Breast epithelium (tissue), 4 donors: ENCODE measurements at regions of chr5 and their contacts with region 1.

Region 1: DNA sequence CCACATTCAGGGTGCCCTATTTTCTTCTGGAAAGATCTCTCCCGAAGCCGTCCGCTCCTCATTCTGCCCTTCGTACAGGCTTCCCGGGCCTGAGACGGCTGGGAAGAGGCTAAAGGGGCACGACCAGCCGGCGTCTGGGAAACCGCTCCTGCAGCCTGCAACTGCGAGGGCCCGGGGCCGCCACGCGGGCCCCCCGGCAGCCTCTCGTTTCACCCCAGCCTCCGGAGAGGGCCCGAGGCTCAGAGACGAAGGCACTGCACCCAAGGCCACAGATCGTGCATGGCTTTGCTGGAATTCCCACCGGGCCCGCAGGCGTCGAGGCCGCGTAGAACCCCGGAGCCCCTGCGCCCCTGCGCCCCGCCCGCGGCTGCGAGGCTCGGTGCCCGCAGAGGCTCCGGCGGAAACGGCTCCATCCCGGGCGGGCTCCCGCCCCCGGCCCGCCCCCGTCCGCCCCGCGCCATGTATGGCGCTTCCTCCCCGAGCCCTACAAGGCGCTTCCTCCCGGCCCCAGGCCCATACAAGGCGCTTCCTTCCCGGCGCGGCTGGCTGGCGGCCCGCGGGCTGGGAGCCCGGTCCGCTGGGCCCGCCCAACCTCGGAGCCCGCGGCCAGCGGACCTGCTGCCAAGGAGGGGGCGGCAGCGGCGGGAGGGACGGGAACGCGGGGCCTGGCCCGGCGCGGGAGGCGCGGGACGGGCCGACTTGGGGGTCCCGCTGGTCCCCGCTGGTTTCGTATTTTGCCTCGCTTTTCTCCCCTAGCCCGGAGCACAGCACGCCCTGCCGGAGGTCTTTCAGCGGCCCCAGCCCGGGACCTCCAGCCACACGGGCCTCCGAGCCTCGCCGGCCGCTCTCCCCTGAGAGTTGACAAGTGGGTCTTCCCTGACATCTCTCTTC is 26.6 kb downstream of the EGR1 start:
- DNase-seq: peak; percentile 89 to 92
- H3K4me3 ChIP-seq: peak overlapping the region; percentile 48 to 75 (median 65)
- H3K27ac ChIP-seq: peak overlapping the region; percentile 86 to 91
- H3K4me1 ChIP-seq: peaks cover 13 to 15% of the 10 kb centered on the region in 2 donors
- H3K27me3 ChIP-seq: no peaks in the 10 kb centered on the region
- CTCF ChIP-seq: no peak
- POLR2A ChIP-seq: no peak

Region 2: DNA sequence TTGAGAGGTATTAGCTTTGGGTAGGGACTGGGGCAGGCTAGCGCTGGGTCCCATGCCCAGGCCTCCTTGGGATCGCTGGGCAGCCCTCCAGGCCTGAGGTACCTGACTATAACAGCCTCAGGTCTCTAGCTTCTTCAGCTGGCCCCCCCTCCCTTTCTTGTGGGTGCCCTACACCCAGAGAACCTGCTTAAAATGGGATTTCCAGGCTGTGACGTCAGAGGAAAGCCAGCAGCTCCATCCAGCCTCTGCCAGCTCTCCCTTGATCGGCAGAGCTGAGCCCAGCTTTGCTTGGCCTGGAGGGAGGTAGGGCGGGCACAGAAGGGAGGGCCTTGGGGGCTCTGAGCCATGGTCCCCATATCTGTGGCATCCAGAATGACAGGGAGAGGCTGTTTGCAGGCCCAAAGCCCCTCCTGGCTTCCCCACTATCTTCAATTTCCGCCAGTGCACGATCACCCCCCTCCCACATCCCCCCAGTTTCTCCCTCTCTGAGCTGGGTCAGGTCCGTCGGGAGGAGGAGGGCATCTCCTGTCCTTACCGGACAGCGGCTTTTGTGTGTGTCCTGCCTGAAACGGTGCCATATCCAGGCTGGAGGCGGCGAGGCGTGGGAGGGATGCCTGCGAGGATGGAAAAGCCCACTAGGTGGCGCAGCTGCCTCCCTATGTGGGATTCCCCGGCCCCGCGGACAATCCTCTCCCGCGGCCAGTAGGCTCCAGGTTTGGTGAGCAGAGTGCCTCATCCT is 42.2 kb before region 1 on chr5:
- intact Hi-C with region 1: loop called (anchors 1 kb)
- DNase-seq: peak; percentile 82 to 95
- H3K4me3 ChIP-seq: peak overlapping the region in 2 of 3 donors; percentile 13 to 41
- H3K27ac ChIP-seq: peak overlapping the region in 1 of 2 donors; percentile 8
- H3K4me1 ChIP-seq: peaks cover 0 to 3% of the 10 kb centered on the region in 2 donors
- H3K27me3 ChIP-seq: no peaks in the 10 kb centered on the region
- CTCF ChIP-seq: peak; percentile 91 to 98 (median 96)
- POLR2A ChIP-seq: no peak